HEK293 (cell line): ENCODE measurements at regions of chr11 and their contacts with region 1.

Region 1: DNA sequence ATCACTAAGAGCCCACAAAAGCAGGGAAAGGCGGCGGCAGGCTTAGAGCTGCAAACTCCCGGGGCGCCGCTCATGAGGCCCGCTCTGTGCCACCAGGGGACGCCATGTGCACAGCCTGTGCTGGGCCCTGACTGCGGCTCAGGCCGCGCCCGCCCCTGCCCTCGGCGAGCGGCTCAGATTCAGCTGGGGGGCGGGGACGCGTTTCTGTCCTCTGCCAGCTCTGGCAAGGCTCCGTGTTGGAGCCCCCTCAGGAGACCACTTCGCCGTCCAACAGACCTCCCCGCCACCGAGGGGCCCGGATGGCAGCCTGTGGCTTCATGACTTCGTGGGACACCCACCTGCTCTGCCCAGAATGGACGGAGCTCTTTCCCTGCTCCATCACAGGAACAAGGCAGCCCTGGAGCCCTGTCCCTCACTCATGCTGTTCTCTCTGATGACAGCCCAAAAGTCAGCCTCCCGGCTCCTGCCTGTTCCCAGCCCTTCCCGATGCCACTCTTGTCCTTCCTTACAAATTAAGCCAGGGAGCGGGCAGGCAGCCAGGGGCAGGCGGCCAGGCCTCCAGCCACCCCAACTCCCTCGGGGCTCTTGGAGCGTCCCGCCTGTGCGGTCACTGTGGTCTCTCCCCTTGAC is 69.1 kb downstream of the NAT10 start:
- H3K4me3 ChIP-seq: peak overlapping the region; percentile 17
- H3K27ac ChIP-seq: no peak overlapping the region; the same call in 1 of the 2 replicates
- H3K4me1 ChIP-seq: no peaks in the 10 kb centered on the region
- CTCF ChIP-seq: peak; percentile 96

Region 2: GRCh38 chr11:34185926-34186841 is 11.7 kb after region 1 on chr11:
- CTCF ChIA-PET with region 1: interaction called, 12 read pairs
- POLR2A ChIA-PET with region 1: no interaction called
- H3K4me3 ChIP-seq: no peak overlapping the region
- H3K27ac ChIP-seq: no peak overlapping the region
- H3K4me1 ChIP-seq: no peaks in the 10 kb centered on the region
- CTCF ChIP-seq: no peak

Region 3: DNA sequence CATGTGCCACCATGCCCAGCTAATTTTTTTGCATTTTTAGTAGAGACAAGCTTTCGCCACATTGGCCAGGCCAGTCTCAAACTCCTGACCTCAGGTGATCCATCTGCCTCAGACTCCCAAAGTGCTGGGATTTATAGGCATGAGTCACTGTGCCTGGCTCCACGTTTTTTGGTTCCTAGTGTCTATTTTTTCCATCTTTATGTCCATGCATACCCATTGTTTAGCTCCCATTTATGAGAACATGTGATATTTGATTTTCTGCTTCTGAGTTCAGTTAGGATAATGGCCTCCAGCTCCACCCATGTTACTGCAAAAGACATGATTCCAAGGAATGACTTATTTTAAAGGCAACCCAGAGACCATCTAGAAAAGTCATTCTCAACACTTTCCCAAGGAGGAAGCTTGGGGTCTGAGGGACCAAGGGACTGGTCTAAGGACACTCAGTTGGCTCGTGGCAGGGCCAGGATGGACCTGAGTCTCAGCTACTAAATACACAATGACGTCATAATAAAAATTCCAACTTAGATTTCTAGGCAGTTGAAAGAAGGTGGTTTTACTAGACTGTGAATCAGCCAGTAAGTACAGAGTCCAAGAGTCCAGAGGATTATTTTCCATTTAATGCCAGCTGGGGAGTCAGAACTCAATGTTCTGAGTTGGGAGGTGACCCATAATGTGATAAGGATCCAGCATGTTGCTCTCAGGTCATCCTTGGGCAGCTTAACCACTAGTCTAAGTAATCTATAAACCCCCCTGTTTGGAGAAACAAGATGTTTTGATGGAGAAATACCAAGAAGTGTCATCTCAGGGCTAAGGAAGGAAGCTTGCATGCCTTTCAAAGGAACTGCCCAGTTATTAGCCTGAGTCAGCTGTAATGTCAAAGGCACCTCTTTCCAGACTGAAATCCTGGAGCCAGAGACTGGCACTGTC is 143.8 kb after region 1 on chr11:
- CTCF ChIA-PET with region 1: interaction called, 11 read pairs
- POLR2A ChIA-PET with region 1: no interaction called
- H3K4me3 ChIP-seq: no peak overlapping the region
- H3K27ac ChIP-seq: no peak overlapping the region
- H3K4me1 ChIP-seq: peaks cover 2% of the 10 kb centered on the region; the same call in 1 of the 2 replicates
- CTCF ChIP-seq: no peak

Region 4: DNA sequence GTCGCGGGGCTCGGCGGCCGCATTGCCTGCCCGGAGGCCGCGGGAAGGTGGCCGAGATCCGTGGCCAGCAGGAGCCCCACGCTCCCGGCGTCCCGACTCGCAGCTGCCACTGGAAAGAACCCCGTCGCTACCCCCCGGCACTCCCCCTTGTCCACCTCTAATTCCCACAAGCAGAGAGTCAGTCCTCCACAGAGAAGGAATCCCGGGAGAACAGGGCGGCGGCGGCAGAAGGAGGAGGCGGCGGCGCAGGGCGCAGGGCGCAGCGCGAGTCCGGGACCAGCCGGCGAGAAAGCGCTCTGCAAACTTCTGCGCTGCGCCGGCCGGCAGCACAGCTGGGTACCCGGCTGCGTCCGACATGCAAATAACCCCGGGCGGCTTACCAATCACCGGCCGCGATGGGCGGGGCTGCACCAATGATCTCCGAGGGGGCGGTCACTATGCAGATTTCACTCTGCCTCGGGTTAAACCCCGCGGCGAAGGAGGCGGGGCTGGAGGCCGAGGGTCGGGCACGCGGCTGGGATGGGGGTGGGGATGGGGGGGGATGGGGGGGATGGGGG is 183.3 kb after region 1 on chr11 and contains the start of gene ABTB2:
- CTCF ChIA-PET with region 1: interaction called, 48 read pairs
- POLR2A ChIA-PET with region 1: interaction called, 65 read pairs
- H3K4me3 ChIP-seq: peak within 1 kb of the TSS; percentile 69
- H3K27ac ChIP-seq: peak within 1 kb of the TSS; percentile 85
- H3K4me1 ChIP-seq: peaks cover 3% of the 10 kb centered on the region; the same call in 1 of the 2 replicates
- CTCF ChIP-seq: no peak